ENCODE measurements at regions of chr15 and their contacts with region 1.

Region 1: DNA sequence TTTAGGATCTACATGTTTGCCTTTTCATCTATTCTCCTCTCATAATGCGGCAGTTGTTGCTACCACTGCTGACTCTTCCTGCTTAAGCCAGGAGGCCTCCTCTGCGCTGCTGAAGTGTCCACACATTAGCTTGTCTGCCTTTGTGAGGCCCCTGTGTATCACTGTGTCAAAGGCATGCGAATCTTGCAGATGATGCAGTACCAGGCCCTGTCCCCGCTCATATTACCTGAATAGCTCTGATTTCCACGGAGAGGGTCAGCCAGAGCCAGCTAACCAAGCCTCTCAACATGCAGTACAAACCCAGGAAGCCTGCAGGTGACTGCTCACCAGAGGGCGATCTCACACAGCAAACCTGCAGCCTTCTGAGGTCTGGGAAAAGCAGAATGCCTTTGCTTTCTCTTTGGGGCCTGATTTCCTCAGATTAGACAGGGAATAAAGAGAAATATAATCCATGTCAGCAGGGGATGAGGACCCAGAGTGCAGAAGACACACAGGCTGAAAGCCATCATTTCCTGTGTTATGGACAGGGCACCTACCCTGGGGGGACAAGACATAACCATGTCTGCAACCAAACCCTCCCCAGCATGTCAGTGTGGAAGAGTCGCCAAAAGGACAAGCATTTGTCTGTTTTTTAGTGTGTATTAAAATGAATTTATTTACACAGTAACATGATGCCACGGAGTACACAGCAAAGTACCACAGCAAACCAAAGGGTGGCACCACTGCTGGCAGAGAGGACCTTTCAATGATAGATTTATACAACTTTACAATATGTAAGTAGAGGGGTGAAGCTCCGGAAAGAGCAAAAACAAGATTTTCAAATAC is 36.8 kb upstream of the TSPAN3 start:
- DNase-seq: no peak

Region 2: GRCh38 chr15:77024271-77025082 is 83.3 kb before region 1 on chr15:
- intact Hi-C with region 1: loop called (anchors 2 kb)
- DNase-seq: peak; percentile 77

Region 3: DNA sequence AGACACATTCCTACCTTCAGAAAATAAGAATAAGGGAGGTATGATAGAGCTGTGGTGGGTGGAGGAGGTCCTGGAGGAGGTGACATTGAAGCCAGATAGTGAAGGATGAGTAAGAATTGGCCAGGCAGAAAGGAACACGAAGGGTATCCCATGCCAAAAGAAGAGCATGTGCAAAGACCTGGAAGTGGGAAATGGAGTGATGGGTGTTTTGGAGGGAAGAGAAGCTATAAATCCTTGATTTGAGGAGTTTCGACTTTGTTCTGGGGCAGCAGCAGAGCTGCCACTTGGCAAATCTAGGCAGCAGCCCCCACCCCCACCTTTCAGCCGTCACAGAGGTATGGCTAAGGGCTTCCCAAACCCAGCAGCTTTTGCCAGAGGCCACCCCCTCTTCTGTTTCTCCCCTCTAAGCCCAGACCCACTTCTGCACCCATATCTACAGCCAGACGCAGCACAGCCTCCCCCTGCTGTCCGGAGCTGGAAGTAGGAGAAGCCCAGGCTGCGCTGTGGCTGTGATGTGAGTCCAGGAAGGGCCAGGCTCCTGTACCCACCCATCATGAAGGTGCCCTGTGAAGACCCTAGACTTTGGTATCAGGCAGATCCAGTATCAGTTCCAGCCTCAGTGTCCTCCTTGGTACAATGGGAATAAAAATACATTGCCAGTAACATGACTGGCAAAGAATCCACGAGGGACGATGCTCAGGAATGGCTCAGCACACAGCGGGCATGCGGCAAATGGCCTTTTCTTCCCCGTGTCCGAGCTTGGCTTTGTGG is 713.6 kb after region 1 on chr15:
- intact Hi-C with region 1: loop called (anchors 10 kb)
- DNase-seq: no peak

Measured in cardiac septum (tissue), 1 donor.